ENCODE measurements at regions of chr15 and their contacts with region 1.

Region 1: GRCh38 chr15:71411538-71412482 is 296.5 kb downstream of the THSD4 start:
- DNase-seq: no peak
- H3K4me3 Mint-ChIP-seq: no peak overlapping the region
- H3K27ac Mint-ChIP-seq: no peak overlapping the region
- H3K4me1 Mint-ChIP-seq: no peaks in the 10 kb centered on the region
- H3K27me3 Mint-ChIP-seq: no peaks in the 10 kb centered on the region
- CTCF ChIP-seq: no peak

Region 2: GRCh38 chr15:71323584-71323983 is 88.2 kb before region 1 on chr15:
- CTCF ChIA-PET with region 1: no interaction called
- POLR2A ChIA-PET with region 1: no interaction called
- intact Hi-C with region 1: loop called (anchors 5 kb)
- DNase-seq: no peak
- H3K4me3 Mint-ChIP-seq: no peak overlapping the region
- H3K27ac Mint-ChIP-seq: no peak overlapping the region
- H3K4me1 Mint-ChIP-seq: peaks cover 4% of the 10 kb centered on the region
- H3K27me3 Mint-ChIP-seq: no peaks in the 10 kb centered on the region
- CTCF ChIP-seq: no peak

Measured in MCF 10A (cell line).